ENCODE measurements at regions of chr5 and their contacts with region 1.

Region 1: DNA sequence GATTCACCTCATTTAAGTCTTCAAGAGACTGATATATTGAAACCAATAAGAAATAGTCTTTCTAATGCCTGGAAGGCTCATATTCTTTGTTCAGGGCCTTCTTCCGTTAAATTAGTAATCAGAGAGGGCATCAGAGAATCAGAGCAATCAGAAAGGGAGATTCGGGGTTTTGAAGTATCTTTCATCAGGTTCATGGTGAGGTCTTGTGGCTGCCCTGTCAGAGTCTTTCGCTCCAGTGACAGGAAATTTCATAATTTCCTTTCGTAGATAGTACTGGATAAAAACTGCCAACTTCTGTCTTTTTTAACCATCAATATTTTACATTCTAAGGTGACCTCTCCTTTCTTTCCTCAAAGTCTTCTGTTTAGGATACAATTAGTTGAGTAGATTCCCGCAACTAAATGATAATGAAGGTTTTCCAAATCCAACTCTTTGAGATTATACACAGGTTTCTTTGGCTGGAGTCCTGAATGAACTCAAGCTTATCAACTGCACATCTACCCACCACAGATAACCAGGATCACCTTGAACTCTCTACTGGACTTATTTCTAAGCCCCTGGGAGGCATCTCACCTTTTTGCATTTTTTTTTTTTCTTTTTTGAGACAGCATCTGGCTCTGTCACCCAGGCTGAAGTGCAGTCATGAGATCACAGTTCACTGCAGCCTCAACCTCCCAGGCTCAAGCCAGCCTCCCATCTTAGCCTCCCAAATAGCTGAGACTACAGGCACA is 5.5 kb downstream of the IL31RA start:
- DNase-seq: peak; percentile 56
- H3K4me3 Mint-ChIP-seq: no peak overlapping the region
- H3K27ac Mint-ChIP-seq: peak overlapping the region; percentile 54
- H3K4me1 Mint-ChIP-seq: peaks cover 41% of the 10 kb centered on the region
- H3K27me3 Mint-ChIP-seq: no peaks in the 10 kb centered on the region

Region 2: DNA sequence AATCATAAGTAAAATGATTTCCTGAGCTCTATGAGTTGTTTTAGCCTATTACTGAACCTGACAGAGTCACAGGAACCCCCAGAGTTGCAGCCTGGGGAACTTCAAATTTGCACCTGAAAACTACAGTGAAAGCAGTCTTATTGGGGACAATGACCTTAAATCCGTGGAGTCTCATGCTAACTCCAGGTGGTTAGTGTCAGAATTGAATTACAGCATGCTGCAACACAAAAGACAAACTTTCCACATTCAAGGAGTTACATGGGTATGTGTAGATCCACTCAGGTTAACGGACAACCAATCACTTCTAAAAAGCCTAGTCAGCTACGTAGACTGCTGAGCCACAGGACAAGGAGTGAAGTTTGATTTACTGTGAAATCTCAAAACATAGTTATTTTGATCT is 371.6 kb before region 1 on chr5:
- CTCF ChIA-PET with region 1: no interaction called
- intact Hi-C with region 1: no loop called
- DNase-seq: no peak
- H3K4me3 Mint-ChIP-seq: no peak overlapping the region
- H3K27ac Mint-ChIP-seq: no peak overlapping the region
- H3K4me1 Mint-ChIP-seq: peaks cover 12% of the 10 kb centered on the region
- H3K27me3 Mint-ChIP-seq: no peaks in the 10 kb centered on the region

Region 3: DNA sequence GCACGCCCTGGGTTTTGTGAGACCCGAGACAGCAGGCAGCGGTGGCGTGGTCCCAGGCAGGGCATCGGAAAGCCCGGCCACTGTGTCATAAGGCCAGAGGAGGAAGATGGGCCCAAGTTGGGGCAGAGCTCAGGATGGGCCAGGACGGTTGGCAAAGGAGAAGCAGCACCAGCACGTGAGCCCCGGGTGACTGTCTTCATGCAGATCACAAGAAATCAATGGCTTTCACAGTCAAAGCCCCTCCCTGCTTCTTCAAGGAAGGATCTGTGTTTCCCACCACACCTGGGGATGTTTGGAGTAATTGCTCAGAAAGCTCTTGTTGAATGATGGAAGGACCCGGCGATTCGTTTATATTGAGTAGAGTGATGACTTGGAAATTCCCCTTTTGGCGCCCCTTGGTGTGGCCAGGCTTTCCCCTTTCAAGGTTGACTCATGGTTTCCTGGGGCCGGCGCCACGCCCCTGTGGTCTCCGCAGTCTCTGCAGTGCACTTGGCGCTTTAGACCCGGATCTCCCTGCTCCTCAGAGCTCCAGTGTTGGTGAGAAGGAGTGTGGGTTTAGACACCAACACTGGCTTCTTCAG is 46.5 kb after region 1 on chr5:
- CTCF ChIA-PET with region 1: no interaction called
- intact Hi-C with region 1: loop called (anchors 1 kb)
- DNase-seq: peak; percentile 84
- H3K4me3 Mint-ChIP-seq: no peak overlapping the region
- H3K27ac Mint-ChIP-seq: no peak overlapping the region
- H3K4me1 Mint-ChIP-seq: peaks cover 25% of the 10 kb centered on the region
- H3K27me3 Mint-ChIP-seq: peaks cover 4% of the 10 kb centered on the region

Region 4: GRCh38 chr5:55923177-55923771 is 66.6 kb after region 1 on chr5:
- CTCF ChIA-PET with region 1: no interaction called
- intact Hi-C with region 1: no loop called
- DNase-seq: peak; percentile 46
- H3K4me3 Mint-ChIP-seq: peak overlapping the region; percentile 78
- H3K27ac Mint-ChIP-seq: peak overlapping the region; percentile 64
- H3K4me1 Mint-ChIP-seq: peaks cover 21% of the 10 kb centered on the region
- H3K27me3 Mint-ChIP-seq: peaks cover 2% of the 10 kb centered on the region

Region 5: GRCh38 chr5:56039985-56040384 is 183.3 kb after region 1 on chr5:
- CTCF ChIA-PET with region 1: no interaction called
- intact Hi-C with region 1: no loop called
- DNase-seq: no peak
- H3K4me3 Mint-ChIP-seq: no peak overlapping the region
- H3K27ac Mint-ChIP-seq: no peak overlapping the region
- H3K4me1 Mint-ChIP-seq: peaks cover 19% of the 10 kb centered on the region
- H3K27me3 Mint-ChIP-seq: no peaks in the 10 kb centered on the region

Region 6: GRCh38 chr5:56774957-56775356 is 918.3 kb after region 1 on chr5:
- CTCF ChIA-PET with region 1: no interaction called
- intact Hi-C with region 1: no loop called
- DNase-seq: no peak
- H3K4me3 Mint-ChIP-seq: no peak overlapping the region
- H3K27ac Mint-ChIP-seq: no peak overlapping the region
- H3K4me1 Mint-ChIP-seq: no peaks in the 10 kb centered on the region
- H3K27me3 Mint-ChIP-seq: no peaks in the 10 kb centered on the region

Measured in activated naive CD4-positive, alpha-beta T cell treated with anti-CD3 and anti-CD28 coated beads for 36 hours (primary cell).